A673 (cell line): ENCODE measurements at regions of chr2 and their contacts with region 1.

Region 1: GRCh38 chr2:176653479-176654443 is 384.5 kb downstream of the MTX2 start:
- DNase-seq: peak; percentile 98
- H3K4me3 ChIP-seq: peak overlapping the region; percentile 20
- H3K27ac ChIP-seq: peak overlapping the region; percentile 99
- H3K4me1 ChIP-seq: peaks cover 87% of the 10 kb centered on the region
- H3K27me3 ChIP-seq: no peaks in the 10 kb centered on the region
- CTCF ChIP-seq: peak; percentile 90

Region 2: GRCh38 chr2:175251425-175252041 is 1402.2 kb before region 1 on chr2:
- CTCF ChIA-PET with region 1: no interaction called
- POLR2A ChIA-PET with region 1: no interaction called
- intact Hi-C with region 1: loop called (anchors 5 kb)
- DNase-seq: peak; percentile 72
- H3K4me3 ChIP-seq: no peak overlapping the region
- H3K27ac ChIP-seq: no peak overlapping the region
- H3K4me1 ChIP-seq: no peaks in the 10 kb centered on the region
- H3K27me3 ChIP-seq: no peaks in the 10 kb centered on the region
- CTCF ChIP-seq: peak; percentile 84

Region 3: GRCh38 chr2:176126929-176127773 is 526.6 kb before region 1 on chr2:
- CTCF ChIA-PET with region 1: interaction called, 24 read pairs
- POLR2A ChIA-PET with region 1: interaction called, 7 read pairs
- intact Hi-C with region 1: loop called (anchors 2 kb)
- DNase-seq: peak; percentile 87
- H3K4me3 ChIP-seq: peak overlapping the region; percentile 62
- H3K27ac ChIP-seq: peak overlapping the region; percentile 98
- H3K4me1 ChIP-seq: peaks cover 38% of the 10 kb centered on the region
- H3K27me3 ChIP-seq: no peaks in the 10 kb centered on the region
- CTCF ChIP-seq: peak; percentile 93

Region 4: GRCh38 chr2:176508984-176509740 is 144.6 kb before region 1 on chr2:
- CTCF ChIA-PET with region 1: no interaction called
- POLR2A ChIA-PET with region 1: no interaction called
- intact Hi-C with region 1: no loop called
- DNase-seq: no peak
- H3K4me3 ChIP-seq: no peak overlapping the region
- H3K27ac ChIP-seq: no peak overlapping the region
- H3K4me1 ChIP-seq: peaks cover 6% of the 10 kb centered on the region
- H3K27me3 ChIP-seq: no peaks in the 10 kb centered on the region
- CTCF ChIP-seq: no peak

Region 5: DNA sequence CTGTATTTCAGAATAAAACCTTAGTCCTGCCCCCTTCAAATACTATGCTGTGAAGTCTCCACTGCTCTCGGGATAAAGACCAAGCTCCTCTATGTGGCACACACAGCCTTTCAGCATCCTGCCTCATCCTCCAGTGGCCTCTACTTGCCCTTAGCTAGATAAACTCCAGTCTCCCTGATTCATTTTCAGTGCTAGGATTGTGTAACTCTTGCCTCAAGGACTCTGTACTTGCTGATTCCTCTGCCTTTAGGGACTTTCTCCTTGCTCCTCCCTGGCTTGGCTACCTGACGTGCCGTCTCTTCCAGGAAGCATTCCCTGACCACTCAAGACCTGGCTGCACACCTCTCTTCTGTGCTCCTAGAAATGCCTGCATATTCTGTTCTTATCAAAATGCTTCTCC is 32.1 kb after region 1 on chr2:
- CTCF ChIA-PET with region 1: interaction called, 3 read pairs
- POLR2A ChIA-PET with region 1: interaction called, 11 read pairs
- intact Hi-C with region 1: loop called (anchors 1 kb)
- DNase-seq: no peak
- H3K4me3 ChIP-seq: no peak overlapping the region
- H3K27ac ChIP-seq: no peak overlapping the region
- H3K4me1 ChIP-seq: peaks cover 93% of the 10 kb centered on the region
- H3K27me3 ChIP-seq: no peaks in the 10 kb centered on the region
- CTCF ChIP-seq: no peak

Region 6: DNA sequence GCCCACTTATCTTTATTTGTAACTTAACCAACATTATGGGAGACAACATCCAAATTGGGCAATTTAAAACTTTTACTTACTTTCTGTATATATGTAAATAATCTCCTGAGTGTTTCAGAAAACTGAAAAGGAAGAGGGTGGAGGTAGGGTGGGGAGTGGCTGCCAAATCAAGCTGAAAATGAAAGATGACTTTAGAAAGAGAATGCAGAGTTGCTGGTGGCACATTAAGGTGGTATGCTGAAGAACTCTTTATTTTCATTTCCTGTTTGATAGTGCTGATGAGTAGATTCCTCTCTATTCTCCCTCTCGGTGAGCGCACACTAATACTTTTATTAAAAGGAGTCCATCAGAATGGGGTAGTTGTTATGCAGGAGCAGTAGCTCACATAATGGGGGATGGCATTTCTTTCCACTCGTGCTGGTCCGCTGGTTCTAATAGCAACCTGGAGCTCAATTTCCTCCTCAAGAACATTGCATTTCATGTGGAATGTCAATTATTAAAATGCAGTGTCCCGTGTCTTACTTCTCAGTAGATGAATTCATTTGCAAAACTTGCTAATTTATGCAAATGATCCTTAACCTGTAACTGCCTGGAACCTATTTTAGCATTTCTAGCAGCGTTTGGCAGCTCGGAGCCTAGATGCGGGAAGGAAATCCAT is 91.9 kb after region 1 on chr2:
- CTCF ChIA-PET with region 1: no interaction called
- POLR2A ChIA-PET with region 1: no interaction called
- intact Hi-C with region 1: loop called (anchors 5 kb)
- DNase-seq: peak; percentile 57
- H3K4me3 ChIP-seq: no peak overlapping the region
- H3K27ac ChIP-seq: peak overlapping the region; percentile 74
- H3K4me1 ChIP-seq: peaks cover 79% of the 10 kb centered on the region
- H3K27me3 ChIP-seq: no peaks in the 10 kb centered on the region
- CTCF ChIP-seq: no peak

Region 7: DNA sequence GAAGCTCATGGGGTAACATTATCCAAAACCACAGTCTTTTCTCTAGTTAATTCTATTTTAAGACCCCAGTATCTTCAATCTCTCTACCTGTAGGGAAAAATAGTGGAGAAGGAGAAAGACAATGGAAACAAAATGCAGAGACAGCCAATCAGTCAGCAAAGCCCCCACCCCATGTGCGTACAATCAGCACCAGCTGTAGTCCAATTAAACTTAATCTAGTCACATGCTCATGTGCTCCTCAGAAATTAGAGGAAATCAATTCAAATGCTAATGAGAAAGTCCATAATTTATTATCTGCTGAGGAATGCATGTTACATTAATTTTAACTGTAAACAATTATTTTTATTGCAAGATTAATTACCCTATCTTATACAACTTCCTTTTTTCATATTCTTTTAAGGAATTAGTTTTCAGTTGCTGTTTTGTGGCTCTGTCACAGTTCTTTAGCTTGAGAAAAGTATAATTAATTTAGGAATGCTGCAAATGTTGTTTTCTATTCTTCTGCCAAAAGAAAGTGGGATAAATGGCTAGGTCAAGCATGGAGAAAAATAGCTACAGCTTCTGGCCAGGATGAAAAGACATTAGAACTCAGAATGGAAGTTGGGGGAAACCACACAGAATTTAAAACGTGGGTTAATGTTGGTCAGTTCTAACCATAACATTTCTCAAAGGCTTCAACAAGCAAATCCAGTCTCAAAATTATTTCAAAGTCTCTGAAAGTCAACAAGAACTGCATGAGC is 326.4 kb after region 1 on chr2:
- CTCF ChIA-PET with region 1: no interaction called
- POLR2A ChIA-PET with region 1: interaction called, 3 read pairs
- intact Hi-C with region 1: loop called (anchors 2 kb)
- DNase-seq: peak; percentile 61
- H3K4me3 ChIP-seq: no peak overlapping the region
- H3K27ac ChIP-seq: no peak overlapping the region
- H3K4me1 ChIP-seq: peaks cover 31% of the 10 kb centered on the region
- H3K27me3 ChIP-seq: peaks cover 32% of the 10 kb centered on the region
- CTCF ChIP-seq: no peak